ENCODE measurements at regions of chr6 and their contacts with region 1.

Region 1: GRCh38 chr6:11722805-11723631 is 55.6 kb downstream of the ADTRP start:
- DNase-seq: no peak
- H3K4me3 Mint-ChIP-seq: peak overlapping the region; percentile 56
- H3K27ac Mint-ChIP-seq: peak overlapping the region; percentile 50
- H3K4me1 Mint-ChIP-seq: peaks cover 27% of the 10 kb centered on the region
- H3K27me3 Mint-ChIP-seq: no peaks in the 10 kb centered on the region

Region 2: GRCh38 chr6:11700118-11700718 is 22.8 kb before region 1 on chr6:
- CTCF ChIA-PET with region 1: no interaction called
- POLR2A ChIA-PET with region 1: no interaction called
- DNase-seq: no peak
- H3K4me3 Mint-ChIP-seq: no peak overlapping the region
- H3K27ac Mint-ChIP-seq: no peak overlapping the region
- H3K4me1 Mint-ChIP-seq: no peaks in the 10 kb centered on the region
- H3K27me3 Mint-ChIP-seq: peaks cover 2% of the 10 kb centered on the region

Region 3: GRCh38 chr6:11711003-11711983 is 11.7 kb before region 1 on chr6:
- CTCF ChIA-PET with region 1: interaction called, 10 read pairs
- POLR2A ChIA-PET with region 1: interaction called, 30 read pairs
- DNase-seq: no peak
- H3K4me3 Mint-ChIP-seq: no peak overlapping the region
- H3K27ac Mint-ChIP-seq: peak overlapping the region; percentile 68
- H3K4me1 Mint-ChIP-seq: peaks cover 54% of the 10 kb centered on the region
- H3K27me3 Mint-ChIP-seq: no peaks in the 10 kb centered on the region

Measured in activated CD4-positive, alpha-beta memory T cell treated with anti-CD3 and anti-CD28 coated beads, Interleukin-2, amount 10 ng/mL, durations not matched to agents 7 days and 5 days (primary cell).